Heart right ventricle (tissue), 16 donors: ENCODE measurements at regions of chr9 and their contacts with region 1.

Region 1: DNA sequence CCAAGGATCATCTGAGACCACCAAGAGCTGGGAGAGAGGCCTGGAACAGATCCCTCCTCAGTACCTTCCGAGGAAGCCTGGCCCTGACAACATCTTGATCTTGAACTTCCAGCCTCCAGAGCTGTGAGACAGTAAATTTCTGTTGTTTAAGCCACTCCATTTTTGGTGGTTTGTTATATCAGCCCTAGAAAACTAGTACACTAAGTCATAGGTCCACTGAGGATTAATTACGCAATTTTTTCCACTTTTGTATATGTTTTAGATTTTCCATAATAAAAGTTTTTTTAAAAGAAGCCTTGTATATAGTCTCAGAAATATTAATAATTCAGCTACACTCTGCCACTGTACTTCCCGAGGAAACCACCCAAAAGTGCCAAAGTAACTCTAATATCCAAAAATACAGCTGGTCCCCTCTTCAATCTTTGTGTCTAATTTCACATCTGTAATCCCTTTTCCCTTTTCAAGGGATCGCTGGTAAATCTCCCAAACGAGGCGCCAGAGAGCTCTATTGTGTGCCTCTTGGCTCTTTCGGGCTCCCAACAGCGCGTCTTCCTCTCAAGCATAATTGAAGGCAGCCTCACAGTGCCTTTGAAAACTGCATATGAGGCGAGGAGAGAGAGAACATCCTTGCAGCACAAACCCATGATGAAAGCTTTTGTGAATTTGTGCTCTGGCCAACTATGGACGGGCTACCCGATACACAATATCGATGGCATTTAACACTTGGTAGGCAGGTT is 32.7 kb downstream of the PRUNE2 start:
- DNase-seq: peak in 1 of 2 donors; percentile 6
- ATAC-seq: peak in 1 of 8 donors; percentile 20
- H3K4me3 ChIP-seq: no peak overlapping the region
- H3K27ac ChIP-seq: peak overlapping the region in 2 of 10 donors; percentile 22 to 40
- H3K4me1 ChIP-seq: peaks cover 0 to 6% (median 0%) of the 10 kb centered on the region in 9 donors
- H3K27me3 ChIP-seq: peaks cover 0 to 40% (median 6%) of the 10 kb centered on the region in 7 donors
- CTCF ChIP-seq: no peak

Region 2: GRCh38 chr9:76744336-76744735 is 128.9 kb before region 1 on chr9:
- intact Hi-C with region 1: loop called in 1 of 10 experiments (anchors 10 kb)
- DNase-seq: no peak
- ATAC-seq: no peak
- H3K4me3 ChIP-seq: no peak overlapping the region
- H3K27ac ChIP-seq: no peak overlapping the region
- H3K4me1 ChIP-seq: no peaks in the 10 kb centered on the region
- H3K27me3 ChIP-seq: no peaks in the 10 kb centered on the region
- CTCF ChIP-seq: no peak

Region 3: DNA sequence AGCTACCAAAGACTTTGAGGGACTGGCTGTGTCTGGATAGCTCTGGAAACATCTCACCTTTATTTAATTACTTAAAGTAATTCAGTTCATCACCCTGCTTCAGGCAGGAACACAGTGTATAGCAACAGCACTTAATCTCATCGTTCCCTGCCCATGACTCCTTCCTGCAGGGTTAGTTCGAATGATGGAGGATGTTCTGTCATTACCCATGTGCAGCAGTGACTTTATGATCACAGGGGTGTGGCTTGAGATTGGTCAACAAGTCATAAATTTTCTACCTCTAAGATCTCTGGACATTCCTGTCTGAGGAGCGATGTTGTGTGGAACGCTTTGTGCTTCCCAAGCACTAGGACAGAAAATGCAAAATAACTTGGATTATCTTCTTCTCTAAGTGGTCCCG is 69.8 kb after region 1 on chr9:
- intact Hi-C with region 1: loop called in 1 of 10 experiments (anchors 10 kb)
- DNase-seq: no peak
- ATAC-seq: no peak
- H3K4me3 ChIP-seq: no peak overlapping the region
- H3K27ac ChIP-seq: no peak overlapping the region
- H3K4me1 ChIP-seq: no peaks in the 10 kb centered on the region
- H3K27me3 ChIP-seq: peaks cover 0 to 6% (median 0%) of the 10 kb centered on the region in 7 donors
- CTCF ChIP-seq: no peak

Region 4: DNA sequence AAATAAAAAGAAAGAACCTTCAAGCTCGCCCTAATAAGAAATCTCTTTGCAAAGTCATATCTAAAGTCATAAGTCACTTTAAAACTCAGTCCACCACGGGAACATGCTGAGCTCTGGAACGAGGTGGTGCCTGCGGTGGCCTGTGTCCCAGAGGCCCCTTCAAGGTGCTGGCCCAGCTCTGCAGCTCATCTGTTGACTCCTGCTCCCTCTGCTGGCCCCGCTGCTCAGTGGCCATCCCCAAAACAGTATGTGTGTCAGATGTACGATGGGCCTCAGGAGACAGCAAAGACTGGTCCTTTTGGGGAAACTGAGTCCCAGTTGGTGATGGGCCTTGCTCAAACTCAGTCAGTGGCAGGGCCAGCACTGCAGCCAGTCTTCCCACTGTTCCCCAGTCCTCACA is 123.5 kb after region 1 on chr9:
- intact Hi-C with region 1: no loop called
- DNase-seq: peak; percentile 25 to 51
- ATAC-seq: peak in 6 of 8 donors; percentile 65 to 95 (median 74)
- H3K4me3 ChIP-seq: no peak overlapping the region
- H3K27ac ChIP-seq: no peak overlapping the region
- H3K4me1 ChIP-seq: peaks cover 0 to 5% (median 0%) of the 10 kb centered on the region in 9 donors
- H3K27me3 ChIP-seq: peaks cover 0 to 14% (median 5%) of the 10 kb centered on the region in 7 donors
- CTCF ChIP-seq: peak in 8 of 9 donors; percentile 9 to 66 (median 54)